Common myeloid progenitor, CD34-positive (primary cell): ENCODE measurements at regions of chr4 and their contacts with region 1.

Region 1: DNA sequence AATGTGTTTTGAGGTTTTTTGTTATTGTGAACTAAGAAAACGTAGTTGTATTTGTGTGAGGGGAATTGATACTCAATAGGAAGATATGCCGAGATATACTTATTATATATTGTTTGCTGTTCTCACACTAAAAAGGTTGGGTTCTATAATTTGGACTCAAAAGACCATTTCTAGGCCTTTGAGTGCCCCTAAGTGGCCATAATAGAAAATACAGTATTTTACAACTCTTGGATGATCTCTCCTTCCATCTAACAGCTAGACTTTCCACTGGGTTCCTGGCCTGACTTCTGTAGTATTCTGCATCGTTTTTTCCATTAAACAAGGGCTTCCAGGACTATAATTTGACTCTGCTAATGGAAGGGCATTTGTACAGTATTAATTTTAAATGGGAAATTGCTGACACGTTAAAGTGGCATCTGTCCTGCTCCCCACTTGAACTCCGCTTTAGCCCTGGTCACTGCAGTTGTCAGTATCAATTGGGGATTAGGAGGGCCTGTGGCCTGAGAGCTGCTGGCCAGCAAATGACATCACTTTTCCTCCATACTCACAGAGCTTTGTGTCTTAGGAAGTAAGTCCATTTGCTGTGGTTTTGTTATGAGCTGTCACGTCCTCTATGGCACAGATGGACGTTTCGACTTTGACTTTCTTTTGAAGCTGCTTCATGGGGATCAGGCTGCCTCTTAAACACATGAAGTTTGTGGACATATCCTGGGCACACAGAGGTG is 176.9 kb downstream of the SLIT2 start:
- DNase-seq: peak in 1 of 3 donors; percentile 10
- H3K4me3 ChIP-seq: no peak overlapping the region
- H3K27ac ChIP-seq: no peak overlapping the region
- H3K4me1 ChIP-seq: no peaks in the 10 kb centered on the region
- H3K27me3 ChIP-seq: peaks cover 0 to 7% (median 4%) of the 10 kb centered on the region in 5 experiments

Region 2: DNA sequence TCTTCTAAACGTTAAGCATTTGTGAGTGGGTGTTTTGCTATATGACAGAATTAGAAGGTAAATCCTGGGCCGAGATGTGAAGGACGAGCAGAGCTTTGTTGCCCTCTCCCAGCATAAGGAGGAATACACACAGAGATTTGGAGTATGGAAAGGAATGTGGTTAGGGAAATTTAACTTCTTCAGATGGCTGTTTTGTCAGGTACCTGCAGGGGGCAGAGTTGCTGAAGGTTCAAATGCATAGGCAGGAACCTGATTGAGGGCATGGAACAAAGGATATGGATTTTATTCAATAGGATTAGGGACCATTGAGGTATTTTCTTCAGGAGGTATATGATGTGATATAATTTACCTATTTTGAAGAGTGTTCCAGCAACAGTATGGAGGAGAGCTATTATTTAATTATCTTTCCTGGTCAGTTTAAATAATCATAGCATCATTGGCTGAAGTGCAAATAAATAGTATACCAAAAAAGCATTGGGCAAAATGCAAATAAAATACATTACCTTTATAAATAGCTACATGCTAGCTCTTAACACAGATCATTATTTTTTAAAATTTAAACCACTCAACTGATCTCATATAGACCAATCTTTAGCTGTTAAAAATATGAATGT is 33.3 kb before region 1 on chr4:
- CTCF ChIA-PET with region 1: interaction called, 10 read pairs
- POLR2A ChIA-PET with region 1: no interaction called
- DNase-seq: peak; percentile 29 to 59 (median 45)
- H3K4me3 ChIP-seq: no peak overlapping the region
- H3K27ac ChIP-seq: no peak overlapping the region
- H3K4me1 ChIP-seq: no peaks in the 10 kb centered on the region
- H3K27me3 ChIP-seq: peaks cover 0 to 1% (median 0%) of the 10 kb centered on the region in 5 experiments

Region 3: GRCh38 chr4:21937689-21938088 is 1509.1 kb after region 1 on chr4:
- CTCF ChIA-PET with region 1: no interaction called
- POLR2A ChIA-PET with region 1: no interaction called
- DNase-seq: no peak
- H3K4me3 ChIP-seq: no peak overlapping the region
- H3K27ac ChIP-seq: no peak overlapping the region
- H3K4me1 ChIP-seq: no peaks in the 10 kb centered on the region
- H3K27me3 ChIP-seq: no peaks in the 10 kb centered on the region